ENCODE measurements at regions of chr17 and their contacts with region 1.

Region 1: DNA sequence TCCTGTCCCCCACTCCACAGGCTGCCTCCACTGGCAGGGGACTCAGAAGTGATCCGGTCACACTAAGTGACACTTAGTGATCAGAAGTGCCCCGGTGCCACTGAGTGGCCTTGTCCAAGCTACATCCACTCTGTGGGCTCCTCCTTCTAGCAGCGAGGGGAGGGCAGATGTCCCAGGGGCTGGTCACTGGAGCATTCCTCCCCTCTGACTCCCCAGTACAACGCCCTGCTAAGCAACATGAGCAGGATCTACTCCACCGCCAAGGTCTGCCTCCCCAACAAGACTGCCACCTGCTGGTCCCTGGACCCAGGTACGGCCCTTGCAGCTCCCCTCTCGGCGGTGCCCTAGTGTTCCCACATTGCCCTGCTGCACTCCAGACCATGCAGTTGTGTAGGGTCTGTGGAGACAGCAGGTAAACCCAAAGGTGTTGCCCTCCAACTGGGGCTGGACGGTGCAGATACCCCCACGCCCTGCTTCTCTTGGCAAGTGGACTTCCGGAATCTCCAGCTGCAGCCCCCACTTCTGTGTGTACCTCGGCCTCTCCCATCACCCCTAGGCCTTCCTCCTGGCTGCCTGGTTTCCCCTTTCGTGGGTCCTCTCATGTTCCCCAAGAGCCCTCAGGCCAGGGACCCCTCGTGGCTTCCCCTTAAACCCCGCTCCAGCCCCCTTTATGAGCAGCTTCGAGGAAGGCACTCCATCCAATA is 2.1 kb downstream of the ACE start:
- DNase-seq: peak; percentile 77 to 80
- ATAC-seq: peak; percentile 60 to 82 (median 77)
- H3K4me3 ChIP-seq: peak overlapping the region in 8 of 10 donors; percentile 21 to 66 (median 61)
- H3K27ac ChIP-seq: peak overlapping the region in 1 of 10 donors; percentile 49
- H3K4me1 ChIP-seq: peaks cover 13 to 62% (median 52%) of the 10 kb centered on the region in 9 donors
- H3K27me3 ChIP-seq: peaks cover 0 to 40% (median 6%) of the 10 kb centered on the region in 7 donors
- CTCF ChIP-seq: peak; percentile 49 to 85 (median 80)

Region 2: DNA sequence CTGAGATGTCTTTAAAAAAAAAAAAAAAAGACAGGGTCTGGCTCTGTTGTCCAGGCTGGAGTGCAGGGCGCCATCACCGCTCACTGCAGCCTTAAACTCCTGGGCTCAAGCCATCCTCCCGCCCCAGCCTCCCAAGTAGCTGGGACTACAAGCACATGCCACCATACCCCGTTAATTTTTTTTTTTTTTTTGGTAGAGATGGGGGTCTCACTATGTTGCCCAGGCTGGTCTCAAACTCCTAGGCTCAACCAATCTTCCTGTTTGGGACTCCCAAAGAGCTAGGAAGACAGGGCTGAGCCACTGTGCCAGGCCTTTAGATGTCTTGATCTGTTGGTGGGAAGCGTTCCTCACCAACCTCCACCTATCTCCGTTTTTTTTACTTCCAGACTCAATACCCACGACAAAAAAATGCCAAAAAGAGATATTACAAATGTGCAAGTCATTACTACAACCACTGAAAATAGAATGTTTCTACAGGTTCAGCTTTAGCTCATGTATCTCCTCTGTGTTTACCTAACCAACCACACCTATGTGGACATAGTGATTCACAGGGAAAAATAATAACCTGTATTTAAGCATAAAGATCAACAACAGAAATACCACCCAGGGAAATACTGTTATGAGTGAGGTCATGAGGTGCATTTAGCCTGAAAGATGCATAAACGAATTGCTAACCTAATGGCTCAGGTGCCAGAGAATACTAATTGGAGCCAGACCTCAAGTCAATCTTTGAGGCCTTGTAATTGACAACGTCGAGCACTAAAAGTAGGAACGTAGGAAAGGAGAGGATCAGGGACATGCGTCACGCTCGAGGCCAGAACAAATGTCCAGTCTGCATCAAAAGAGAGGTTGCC is 1910.5 kb before region 1 on chr17:
- intact Hi-C with region 1: loop called in 1 of 10 experiments (anchors 10 kb)
- DNase-seq: no peak
- ATAC-seq: no peak
- H3K4me3 ChIP-seq: no peak overlapping the region
- H3K27ac ChIP-seq: no peak overlapping the region
- H3K4me1 ChIP-seq: no peaks in the 10 kb centered on the region
- H3K27me3 ChIP-seq: peaks cover 0 to 4% (median 0%) of the 10 kb centered on the region in 7 donors
- CTCF ChIP-seq: no peak

Region 3: DNA sequence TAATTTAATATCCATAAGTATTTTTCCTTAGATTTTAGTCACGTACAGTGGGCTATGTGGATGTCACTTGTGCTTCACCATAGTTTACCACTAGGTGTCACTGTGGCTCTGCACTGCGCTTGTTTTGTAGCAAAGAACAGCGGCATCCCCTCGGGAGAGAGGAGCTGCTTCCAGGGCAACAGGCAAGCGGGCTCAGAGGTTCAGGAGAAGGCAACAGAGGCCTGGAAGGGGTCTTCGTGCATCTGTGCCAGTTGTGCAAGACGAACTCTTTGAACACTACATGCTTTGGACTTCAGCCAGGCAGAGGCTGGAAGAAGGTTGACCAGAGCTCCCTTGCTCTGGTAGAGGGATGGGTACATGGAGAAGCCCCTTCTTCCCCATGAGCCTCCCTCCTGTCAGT is 53.5 kb before region 1 on chr17:
- intact Hi-C with region 1: loop called in 7 of 10 experiments (anchors 1 to 5 kb)
- DNase-seq: peak; percentile 63 to 84
- ATAC-seq: peak; percentile 75 to 88 (median 86)
- H3K4me3 ChIP-seq: no peak overlapping the region
- H3K27ac ChIP-seq: no peak overlapping the region
- H3K4me1 ChIP-seq: peaks cover 0 to 49% (median 25%) of the 10 kb centered on the region in 9 donors
- H3K27me3 ChIP-seq: no peaks in the 10 kb centered on the region
- CTCF ChIP-seq: peak; percentile 89 to 98 (median 98)

Region 4: GRCh38 chr17:63434876-63435684 is 43.9 kb before region 1 on chr17:
- intact Hi-C with region 1: loop called in 7 of 10 experiments (anchors 2 to 5 kb)
- DNase-seq: peak; percentile 79 to 83
- ATAC-seq: peak; percentile 24 to 83 (median 70)
- H3K4me3 ChIP-seq: peak overlapping the region in 1 of 10 donors; percentile 5
- H3K27ac ChIP-seq: peak overlapping the region in 9 of 10 donors; percentile 25 to 79 (median 65)
- H3K4me1 ChIP-seq: peaks cover 33 to 82% (median 71%) of the 10 kb centered on the region in 9 donors
- H3K27me3 ChIP-seq: no peaks in the 10 kb centered on the region
- CTCF ChIP-seq: peak in 5 of 9 donors; percentile 10 to 46 (median 14)

Region 5: DNA sequence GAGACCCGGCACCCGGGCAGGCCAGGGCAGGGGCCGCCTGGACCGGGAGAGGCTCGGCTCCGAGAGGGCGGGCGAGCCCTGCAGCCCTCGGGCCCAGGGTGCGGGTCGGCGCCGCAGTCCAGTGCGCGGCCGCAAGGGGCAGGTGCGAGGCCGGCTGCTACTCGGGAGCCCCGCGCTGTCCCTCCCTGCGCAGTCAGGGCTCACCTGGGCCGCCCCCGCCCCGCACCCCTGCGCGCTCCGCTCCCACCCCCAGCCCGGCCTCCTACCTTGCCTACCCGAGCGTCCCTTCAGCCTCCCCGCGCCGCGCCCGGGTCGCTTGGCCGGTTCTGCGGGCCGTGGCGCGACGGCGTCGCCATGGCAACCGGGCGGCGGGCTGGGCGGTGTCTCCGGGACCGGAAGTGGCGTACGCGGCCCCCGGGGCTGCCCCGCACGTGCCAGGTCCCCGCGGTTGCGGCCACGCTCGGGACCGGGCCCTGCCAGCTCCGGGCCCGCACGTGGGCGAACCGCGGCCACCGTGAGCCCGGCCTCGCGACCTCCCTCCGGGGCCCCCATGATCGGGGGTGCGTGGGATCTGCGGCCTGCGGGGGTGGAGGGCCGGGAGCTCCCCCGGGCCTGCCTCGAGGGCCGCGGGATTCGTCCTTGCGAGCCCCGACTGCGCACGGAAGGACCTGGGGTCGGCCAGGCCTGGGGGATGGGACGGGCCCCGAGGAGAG is 32.8 kb before region 1 on chr17 and contains the start of gene CYB561:
- intact Hi-C with region 1: loop called in 4 of 10 experiments (anchors 2 to 5 kb)
- DNase-seq: peak; percentile 59 to 82
- ATAC-seq: peak; percentile 27 to 84 (median 68)
- H3K4me3 ChIP-seq: peak within 1 kb of the TSS; percentile 34 to 76 (median 65)
- H3K27ac ChIP-seq: peak within 1 kb of the TSS; percentile 62 to 97 (median 90)
- H3K4me1 ChIP-seq: peaks cover 16 to 75% (median 55%) of the 10 kb centered on the region in 9 donors
- H3K27me3 ChIP-seq: no peaks in the 10 kb centered on the region
- CTCF ChIP-seq: peak in 8 of 9 donors; percentile 42 to 69 (median 52)
- total RNA-seq, gene CYB561: 5.5 to 22.8 (median 8.5) TPM

Region 6: DNA sequence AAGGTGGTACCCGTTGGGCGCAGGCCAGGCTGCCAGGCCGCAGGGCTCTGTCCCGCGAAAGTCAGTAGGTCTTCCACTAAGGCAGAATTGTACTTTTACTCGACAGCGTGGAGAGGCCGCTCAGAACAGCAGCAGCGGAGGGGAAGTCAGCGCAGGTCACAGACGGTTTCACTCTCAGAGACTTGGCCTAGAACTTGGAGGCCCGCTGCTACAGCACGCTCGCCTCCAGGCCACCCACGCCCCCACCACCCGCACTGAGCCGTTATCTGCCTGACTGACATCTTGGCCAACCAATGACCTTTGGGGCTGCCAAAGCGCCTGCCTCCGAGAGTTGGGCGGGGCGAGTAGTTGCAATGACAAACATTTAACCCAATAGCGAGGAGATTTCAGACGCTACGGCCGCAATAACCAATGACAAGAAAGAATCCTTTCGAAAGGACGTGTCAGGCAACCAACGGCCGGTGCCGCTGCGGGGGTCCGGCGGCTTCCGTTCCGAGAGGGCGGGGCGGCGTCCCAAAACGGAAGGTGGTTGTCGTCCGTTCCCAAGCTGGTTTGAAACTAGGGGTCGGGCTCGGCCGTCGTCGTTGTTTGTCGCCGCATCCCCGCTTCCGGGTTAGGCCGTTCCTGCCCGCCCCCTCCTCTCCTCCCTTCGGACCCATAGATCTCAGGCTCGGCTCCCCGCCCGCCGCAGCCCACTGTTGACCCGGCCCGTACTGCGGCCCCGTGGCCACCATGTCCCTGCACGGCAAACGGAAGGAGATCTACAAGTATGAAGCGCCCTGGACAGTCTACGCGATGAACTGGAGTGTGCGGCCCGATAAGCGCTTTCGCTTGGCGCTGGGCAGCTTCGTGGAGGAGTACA is 71.2 kb after region 1 on chr17 and contains the start of gene DCAF7:
- intact Hi-C with region 1: loop called in 1 of 10 experiments (anchors 10 kb)
- DNase-seq: peak; percentile 97 to 100
- ATAC-seq: peak; percentile 98 to 99 (median 98)
- H3K4me3 ChIP-seq: peak within 1 kb of the TSS; percentile 85 to 100 (median 96)
- H3K27ac ChIP-seq: peak within 1 kb of the TSS; percentile 78 to 98 (median 93)
- H3K4me1 ChIP-seq: peaks cover 3 to 52% (median 47%) of the 10 kb centered on the region in 9 donors
- H3K27me3 ChIP-seq: no peaks in the 10 kb centered on the region
- CTCF ChIP-seq: peak in 1 of 9 donors; percentile 12
- total RNA-seq, gene DCAF7: 35.2 to 60.7 (median 42.8) TPM

Region 7: GRCh38 chr17:63611354-63611753 is 132.4 kb after region 1 on chr17:
- intact Hi-C with region 1: loop called in 2 of 10 experiments (anchors 5 kb)
- DNase-seq: no peak
- ATAC-seq: no peak
- H3K4me3 ChIP-seq: no peak overlapping the region
- H3K27ac ChIP-seq: peak overlapping the region in 1 of 10 donors; percentile 62
- H3K4me1 ChIP-seq: no peaks in the 10 kb centered on the region
- H3K27me3 ChIP-seq: no peaks in the 10 kb centered on the region
- CTCF ChIP-seq: no peak